Activated CD8-positive, alpha-beta T cell treated with anti-CD3 and anti-CD28 coated beads for 36 hours (primary cell): ENCODE measurements at regions of chr1 and their contacts with region 1.

Region 1: DNA sequence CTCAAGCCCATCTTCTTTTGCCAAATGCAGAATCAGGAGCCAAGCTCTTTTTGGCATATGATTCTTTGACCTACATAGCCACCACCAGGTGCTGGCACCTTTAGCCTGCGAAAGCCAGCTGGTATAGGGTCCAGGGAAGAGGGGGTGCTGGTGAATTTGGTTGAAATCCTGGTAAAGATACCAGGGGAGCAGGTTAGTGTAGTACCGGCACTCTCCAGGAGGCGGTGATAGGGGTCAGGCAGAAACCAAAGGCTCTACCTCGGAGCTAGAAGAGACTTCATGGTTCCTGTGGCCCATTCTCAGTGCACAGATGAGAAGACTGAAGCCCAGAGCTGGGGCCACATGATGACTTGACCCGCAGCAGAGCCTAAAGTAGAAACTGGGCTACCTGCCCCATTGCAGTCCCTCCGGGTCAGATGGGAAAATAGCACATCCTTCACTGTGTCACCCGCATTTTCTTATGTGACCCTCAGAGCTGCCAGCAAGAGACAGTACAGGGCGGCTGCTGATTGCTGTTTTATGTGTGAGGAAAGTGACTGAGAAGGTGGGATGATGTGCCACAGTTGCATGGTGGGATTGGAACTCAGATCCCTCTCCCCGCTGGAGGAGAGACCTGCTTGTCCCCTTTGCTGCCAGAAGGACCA is 36.0 kb upstream of the IL19 start:
- DNase-seq: peak; percentile 80
- ATAC-seq: peak; percentile 48
- H3K4me3 Mint-ChIP-seq: no peak overlapping the region
- H3K27ac Mint-ChIP-seq: peak overlapping the region; percentile 22
- H3K4me1 Mint-ChIP-seq: peaks cover 64% of the 10 kb centered on the region
- H3K27me3 Mint-ChIP-seq: no peaks in the 10 kb centered on the region
- CTCF ChIP-seq: peak; percentile 93

Region 2: GRCh38 chr1:206651958-206652890 is 82.4 kb before region 1 on chr1:
- CTCF ChIA-PET with region 1: no interaction called
- POLR2A ChIA-PET with region 1: no interaction called
- intact Hi-C with region 1: no loop called
- DNase-seq: no peak
- ATAC-seq: no peak
- H3K4me3 Mint-ChIP-seq: no peak overlapping the region
- H3K27ac Mint-ChIP-seq: no peak overlapping the region
- H3K4me1 Mint-ChIP-seq: no peaks in the 10 kb centered on the region
- H3K27me3 Mint-ChIP-seq: peaks cover 5% of the 10 kb centered on the region
- CTCF ChIP-seq: no peak

Region 3: DNA sequence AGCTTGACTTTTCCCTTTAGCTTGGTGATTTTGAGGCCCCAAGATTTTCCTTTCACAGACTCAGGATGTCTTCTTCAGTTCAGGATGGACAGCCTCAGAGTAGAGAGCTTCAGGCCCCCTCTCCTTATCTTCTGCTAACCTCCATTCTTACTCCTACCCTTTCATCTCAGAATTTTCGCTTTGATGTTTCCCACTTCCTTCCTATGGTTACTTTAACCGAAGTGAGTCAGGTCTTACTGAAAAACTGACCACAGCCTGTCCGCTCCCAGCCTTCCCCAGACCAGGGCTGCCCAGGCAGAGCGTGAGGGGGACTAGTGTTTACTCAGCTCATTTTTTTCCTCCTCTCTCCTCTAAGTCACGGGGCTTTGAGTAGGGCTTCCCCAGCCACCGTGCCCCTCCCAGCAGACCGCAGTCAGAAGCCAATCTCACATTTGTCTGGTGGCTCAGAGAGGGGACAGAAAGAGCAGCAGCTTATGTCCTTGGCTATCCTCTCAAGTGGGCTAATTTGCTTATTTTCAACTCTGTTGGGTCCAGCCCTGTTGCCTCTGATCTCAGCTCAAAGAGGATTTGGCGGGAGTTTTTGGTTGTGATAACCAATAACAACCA is 31.7 kb after region 1 on chr1:
- CTCF ChIA-PET with region 1: interaction called, 82 read pairs
- POLR2A ChIA-PET with region 1: interaction called, 5 read pairs
- intact Hi-C with region 1: loop called (anchors 2 kb)
- DNase-seq: peak; percentile 87
- ATAC-seq: peak; percentile 75
- H3K4me3 Mint-ChIP-seq: peak overlapping the region; percentile 47
- H3K27ac Mint-ChIP-seq: peak overlapping the region; percentile 65
- H3K4me1 Mint-ChIP-seq: peaks cover 65% of the 10 kb centered on the region
- H3K27me3 Mint-ChIP-seq: peaks cover 3% of the 10 kb centered on the region
- CTCF ChIP-seq: no peak

Region 4: GRCh38 chr1:206803221-206803730 is 68.7 kb after region 1 on chr1:
- CTCF ChIA-PET with region 1: interaction called, 628 read pairs
- POLR2A ChIA-PET with region 1: interaction called, 19 read pairs
- intact Hi-C with region 1: loop called (anchors 1 kb)
- DNase-seq: peak; percentile 91
- ATAC-seq: peak; percentile 92
- H3K4me3 Mint-ChIP-seq: peak overlapping the region; percentile 6
- H3K27ac Mint-ChIP-seq: peak overlapping the region; percentile 76
- H3K4me1 Mint-ChIP-seq: peaks cover 76% of the 10 kb centered on the region
- H3K27me3 Mint-ChIP-seq: no peaks in the 10 kb centered on the region
- CTCF ChIP-seq: no peak

Region 5: GRCh38 chr1:206834711-206835110 is 100.1 kb after region 1 on chr1:
- CTCF ChIA-PET with region 1: interaction called, 12 read pairs
- POLR2A ChIA-PET with region 1: no interaction called
- intact Hi-C with region 1: no loop called
- DNase-seq: no peak
- ATAC-seq: no peak
- H3K4me3 Mint-ChIP-seq: no peak overlapping the region
- H3K27ac Mint-ChIP-seq: no peak overlapping the region
- H3K4me1 Mint-ChIP-seq: peaks cover 25% of the 10 kb centered on the region
- H3K27me3 Mint-ChIP-seq: peaks cover 4% of the 10 kb centered on the region
- CTCF ChIP-seq: no peak

Region 6: GRCh38 chr1:206892351-206892984 is 157.8 kb after region 1 on chr1:
- CTCF ChIA-PET with region 1: no interaction called
- POLR2A ChIA-PET with region 1: no interaction called
- intact Hi-C with region 1: no loop called
- DNase-seq: no peak
- ATAC-seq: no peak
- H3K4me3 Mint-ChIP-seq: no peak overlapping the region
- H3K27ac Mint-ChIP-seq: no peak overlapping the region
- H3K4me1 Mint-ChIP-seq: peaks cover 70% of the 10 kb centered on the region
- H3K27me3 Mint-ChIP-seq: no peaks in the 10 kb centered on the region
- CTCF ChIP-seq: no peak

Region 7: GRCh38 chr1:206905280-206906164 is 170.9 kb after region 1 on chr1:
- CTCF ChIA-PET with region 1: interaction called, 20 read pairs
- POLR2A ChIA-PET with region 1: no interaction called
- intact Hi-C with region 1: loop called (anchors 5 kb)
- DNase-seq: peak; percentile 70
- ATAC-seq: peak; percentile 90
- H3K4me3 Mint-ChIP-seq: peak overlapping the region; percentile 34
- H3K27ac Mint-ChIP-seq: peak overlapping the region; percentile 96
- H3K4me1 Mint-ChIP-seq: peaks cover 79% of the 10 kb centered on the region
- H3K27me3 Mint-ChIP-seq: no peaks in the 10 kb centered on the region
- CTCF ChIP-seq: no peak